ENCODE measurements at regions of chr1 and their contacts with region 1.

Region 1: GRCh38 chr1:117674521-117675397 is 68.9 kb downstream of the TENT5C start:
- DNase-seq: peak; percentile 64 to 72 (median 66)
- H3K4me3 ChIP-seq: no peak overlapping the region
- H3K4me3 Mint-ChIP-seq: no peak overlapping the region
- H3K27ac ChIP-seq: no peak overlapping the region
- H3K27ac Mint-ChIP-seq: peak overlapping the region in 6 of 7 donors; percentile 3 to 88 (median 74)
- H3K4me1 ChIP-seq: peaks cover 8% of the 10 kb centered on the region
- H3K4me1 Mint-ChIP-seq: peaks cover 5 to 9% (median 7%) of the 10 kb centered on the region in 4 donors
- H3K27me3 ChIP-seq: no peaks in the 10 kb centered on the region
- H3K27me3 Mint-ChIP-seq: peaks cover 0 to 2% of the 10 kb centered on the region in 2 donors

Region 2: DNA sequence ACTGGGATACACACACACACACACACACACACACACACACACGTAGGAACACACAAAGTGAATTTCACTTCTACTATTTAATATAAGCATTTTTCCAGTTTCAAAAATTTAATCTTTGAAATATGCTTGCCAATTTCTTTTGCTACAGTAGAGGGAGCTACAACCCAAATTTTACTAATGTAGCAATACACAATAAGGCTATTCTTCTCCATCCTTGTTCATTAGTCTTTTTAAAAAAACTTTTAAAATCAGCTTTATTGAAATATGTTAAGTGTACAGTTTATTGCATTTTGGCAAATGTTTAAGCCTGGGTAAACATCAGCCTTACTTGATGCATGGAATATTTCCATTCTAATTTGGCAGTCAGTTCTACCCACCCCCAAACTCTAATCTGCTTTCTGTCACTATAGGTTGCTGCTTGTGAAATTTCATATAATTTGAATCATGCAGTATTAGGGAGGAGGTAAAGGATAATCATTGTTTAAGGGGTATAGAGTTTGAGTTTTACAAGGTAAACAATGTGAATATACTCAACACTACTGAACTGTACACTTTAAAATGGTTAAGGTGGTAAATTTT is 161.9 kb before region 1 on chr1:
- CTCF ChIA-PET with region 1: interaction called, 41 read pairs
- POLR2A ChIA-PET with region 1: no interaction called
- intact Hi-C with region 1: loop called (anchors 1 kb)
- DNase-seq: peak in 4 of 5 donors; percentile 23 to 35 (median 28)
- H3K4me3 ChIP-seq: no peak overlapping the region
- H3K4me3 Mint-ChIP-seq: no peak overlapping the region
- H3K27ac ChIP-seq: no peak overlapping the region
- H3K27ac Mint-ChIP-seq: no peak overlapping the region
- H3K4me1 ChIP-seq: no peaks in the 10 kb centered on the region
- H3K4me1 Mint-ChIP-seq: peaks cover 0 to 1% (median 0%) of the 10 kb centered on the region in 4 donors
- H3K27me3 ChIP-seq: no peaks in the 10 kb centered on the region
- H3K27me3 Mint-ChIP-seq: no peaks in the 10 kb centered on the region

Region 3: GRCh38 chr1:117590271-117590925 is 84.4 kb before region 1 on chr1:
- CTCF ChIA-PET with region 1: interaction called, 10 read pairs
- POLR2A ChIA-PET with region 1: no interaction called
- intact Hi-C with region 1: no loop called
- DNase-seq: no peak
- H3K4me3 ChIP-seq: no peak overlapping the region
- H3K4me3 Mint-ChIP-seq: no peak overlapping the region
- H3K27ac ChIP-seq: no peak overlapping the region
- H3K27ac Mint-ChIP-seq: peak overlapping the region in 1 of 7 donors; percentile 47
- H3K4me1 ChIP-seq: no peaks in the 10 kb centered on the region
- H3K4me1 Mint-ChIP-seq: peaks cover 0 to 2% (median 0%) of the 10 kb centered on the region in 4 donors
- H3K27me3 ChIP-seq: no peaks in the 10 kb centered on the region
- H3K27me3 Mint-ChIP-seq: no peaks in the 10 kb centered on the region

Region 4: DNA sequence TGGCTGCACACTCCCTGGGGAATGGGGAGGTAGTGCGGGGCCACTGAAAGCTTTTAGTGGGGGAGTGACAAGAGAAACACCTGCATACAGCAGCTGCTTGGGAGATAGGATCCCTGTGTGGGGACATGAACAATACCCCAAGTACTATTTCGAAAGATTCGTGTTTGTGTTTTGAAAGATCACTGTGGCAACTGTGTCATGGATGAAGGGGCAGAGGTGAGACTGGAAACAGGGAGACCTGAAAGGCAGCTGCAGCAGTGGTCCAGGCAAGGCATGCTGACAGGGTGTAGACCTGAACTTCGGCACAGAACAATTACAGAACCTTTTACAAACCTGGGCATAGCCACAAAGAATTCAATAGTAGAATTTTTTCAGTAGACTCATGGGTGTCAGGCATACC is 36.0 kb before region 1 on chr1:
- CTCF ChIA-PET with region 1: interaction called, 8 read pairs
- POLR2A ChIA-PET with region 1: interaction called, 5 read pairs
- intact Hi-C with region 1: loop called (anchors 5 kb)
- DNase-seq: no peak
- H3K4me3 ChIP-seq: no peak overlapping the region
- H3K4me3 Mint-ChIP-seq: no peak overlapping the region
- H3K27ac ChIP-seq: no peak overlapping the region
- H3K27ac Mint-ChIP-seq: no peak overlapping the region
- H3K4me1 ChIP-seq: peaks cover 15% of the 10 kb centered on the region
- H3K4me1 Mint-ChIP-seq: peaks cover 9 to 26% (median 16%) of the 10 kb centered on the region in 4 donors
- H3K27me3 ChIP-seq: no peaks in the 10 kb centered on the region
- H3K27me3 Mint-ChIP-seq: no peaks in the 10 kb centered on the region

Region 5: DNA sequence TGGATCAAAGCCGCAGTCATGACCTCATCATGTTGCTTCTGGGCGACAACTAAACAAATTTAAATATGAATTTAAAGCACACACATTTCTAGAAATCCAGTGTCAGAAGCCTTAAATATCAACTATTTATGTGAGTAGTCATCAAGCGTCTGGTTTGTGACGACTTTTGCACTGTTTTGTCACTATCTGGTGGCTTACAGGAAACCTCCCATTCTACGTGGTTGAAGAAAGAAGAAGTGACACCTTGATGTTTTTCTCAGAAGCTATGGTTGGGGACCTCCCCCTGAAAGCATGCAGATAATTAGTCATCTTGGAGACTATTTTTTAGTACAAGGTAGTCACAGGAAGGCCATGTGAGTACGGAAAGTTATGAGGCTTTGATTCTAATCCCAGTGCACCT is 10.4 kb before region 1 on chr1:
- CTCF ChIA-PET with region 1: interaction called, 33 read pairs
- POLR2A ChIA-PET with region 1: interaction called, 10 read pairs
- intact Hi-C with region 1: loop called (anchors 1 kb)
- DNase-seq: peak; percentile 84 to 92 (median 89)
- H3K4me3 ChIP-seq: no peak overlapping the region
- H3K4me3 Mint-ChIP-seq: peak overlapping the region in 6 of 8 donors; percentile 29 to 82 (median 64)
- H3K27ac ChIP-seq: peak overlapping the region; percentile 71
- H3K27ac Mint-ChIP-seq: peak overlapping the region; percentile 86 to 99 (median 98)
- H3K4me1 ChIP-seq: peaks cover 77% of the 10 kb centered on the region
- H3K4me1 Mint-ChIP-seq: peaks cover 60 to 89% (median 73%) of the 10 kb centered on the region in 4 donors
- H3K27me3 ChIP-seq: no peaks in the 10 kb centered on the region
- H3K27me3 Mint-ChIP-seq: no peaks in the 10 kb centered on the region

Region 6: DNA sequence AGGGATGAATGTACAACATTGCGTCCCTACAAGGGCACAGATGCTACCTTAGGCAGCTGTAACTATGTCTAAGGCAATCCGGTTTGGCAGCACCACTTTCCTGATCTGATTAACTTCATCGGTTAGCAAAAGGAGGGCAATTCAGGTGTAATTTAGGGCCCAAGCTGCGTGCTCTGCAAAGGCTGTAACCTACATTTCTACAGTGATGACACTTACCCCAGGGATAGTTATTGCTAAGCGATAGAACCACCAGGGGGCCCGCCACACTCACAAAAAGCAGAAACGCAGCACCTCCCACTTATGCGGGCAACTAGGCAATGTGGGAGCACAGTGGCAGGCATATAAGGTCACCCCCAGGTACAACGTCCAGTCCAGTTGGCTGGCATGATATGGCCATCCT is 141.2 kb after region 1 on chr1:
- CTCF ChIA-PET with region 1: no interaction called
- POLR2A ChIA-PET with region 1: no interaction called
- intact Hi-C with region 1: no loop called
- DNase-seq: no peak
- H3K4me3 ChIP-seq: no peak overlapping the region
- H3K4me3 Mint-ChIP-seq: no peak overlapping the region
- H3K27ac ChIP-seq: no peak overlapping the region
- H3K27ac Mint-ChIP-seq: no peak overlapping the region
- H3K4me1 ChIP-seq: no peaks in the 10 kb centered on the region
- H3K4me1 Mint-ChIP-seq: no peaks in the 10 kb centered on the region
- H3K27me3 ChIP-seq: no peaks in the 10 kb centered on the region
- H3K27me3 Mint-ChIP-seq: peaks cover 0 to 2% of the 10 kb centered on the region in 2 donors